Heart right ventricle (tissue), 16 donors: ENCODE measurements at regions of chrX and their contacts with region 1.

Region 1: GRCh38 chrX:46903458-46904242 is 8.6 kb upstream of the JADE3 start:
- DNase-seq: peak; percentile 70 to 77
- ATAC-seq: peak; percentile 95 to 99 (median 98)
- H3K4me3 ChIP-seq: peak overlapping the region in 9 of 10 donors; percentile 28 to 56 (median 45)
- H3K27ac ChIP-seq: no peak overlapping the region
- H3K4me1 ChIP-seq: peaks cover 0 to 12% (median 0%) of the 10 kb centered on the region in 9 donors
- H3K27me3 ChIP-seq: peaks cover 0 to 76% (median 0%) of the 10 kb centered on the region in 7 donors
- CTCF ChIP-seq: peak; percentile 26 to 77 (median 62)

Region 2: GRCh38 chrX:46704767-46705386 is 198.8 kb before region 1 on chrX:
- intact Hi-C with region 1: no loop called
- DNase-seq: no peak
- ATAC-seq: no peak
- H3K4me3 ChIP-seq: no peak overlapping the region
- H3K27ac ChIP-seq: no peak overlapping the region
- H3K4me1 ChIP-seq: no peaks in the 10 kb centered on the region
- H3K27me3 ChIP-seq: peaks cover 0 to 33% (median 0%) of the 10 kb centered on the region in 7 donors
- CTCF ChIP-seq: no peak

Region 3: DNA sequence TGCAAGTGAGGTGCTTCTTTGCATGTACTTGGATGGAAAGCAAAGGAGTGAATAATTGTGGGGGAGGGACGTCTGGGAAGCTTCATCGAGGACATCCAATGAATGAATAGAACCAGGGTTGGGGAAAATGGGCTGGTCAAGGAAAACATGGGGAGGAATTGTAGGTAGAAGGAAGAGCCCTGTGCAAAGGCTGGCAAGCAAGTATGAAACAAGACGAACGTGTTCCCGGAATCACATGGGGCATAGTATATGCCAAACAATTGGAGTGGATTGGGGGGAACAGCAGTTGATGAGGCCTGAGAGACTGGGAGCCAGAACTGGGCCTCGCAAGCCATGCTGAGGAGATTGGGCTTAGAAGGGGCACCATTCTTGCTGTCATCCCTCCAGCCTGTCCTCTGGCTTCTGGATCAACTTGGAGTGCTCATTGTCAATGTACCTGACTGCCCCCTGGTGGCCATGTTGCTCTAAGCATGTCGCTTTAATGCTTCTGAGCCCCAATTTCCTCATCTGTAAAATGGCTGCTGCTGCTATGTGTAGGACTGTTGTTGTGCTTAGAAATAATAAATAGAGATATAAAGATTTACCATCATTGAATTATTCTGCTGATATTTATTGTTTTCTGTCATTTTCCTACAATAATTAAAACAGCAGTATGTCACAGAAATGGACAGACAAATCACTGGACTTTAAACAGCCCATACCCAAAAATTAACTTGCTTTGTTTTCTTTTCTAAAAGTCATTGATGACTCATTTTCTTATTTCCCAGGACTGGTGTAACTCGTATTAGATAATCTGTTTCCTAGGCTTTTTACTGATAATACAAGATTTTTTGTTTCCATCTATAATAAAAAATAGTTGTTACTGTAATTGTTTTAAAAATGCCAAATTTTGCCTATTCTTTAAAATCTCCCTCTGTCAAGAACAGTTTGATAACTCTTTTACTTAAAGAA is 75.0 kb after region 1 on chrX:
- intact Hi-C with region 1: loop called in 5 of 10 experiments (anchors 2 to 10 kb)
- DNase-seq: peak; percentile 48 to 62
- ATAC-seq: peak in 5 of 8 donors; percentile 30 to 67 (median 57)
- H3K4me3 ChIP-seq: no peak overlapping the region
- H3K27ac ChIP-seq: peak overlapping the region in 1 of 10 donors; percentile 23
- H3K4me1 ChIP-seq: peaks cover 0 to 5% (median 0%) of the 10 kb centered on the region in 9 donors
- H3K27me3 ChIP-seq: peaks cover 0 to 26% (median 0%) of the 10 kb centered on the region in 7 donors
- CTCF ChIP-seq: peak; percentile 15 to 70 (median 60)

Region 4: GRCh38 chrX:47030339-47030738 is 126.7 kb after region 1 on chrX:
- intact Hi-C with region 1: loop called in 8 of 10 experiments (anchors 1 to 10 kb)
- DNase-seq: peak in 1 of 2 donors; percentile 32
- ATAC-seq: peak in 1 of 8 donors; percentile 33
- H3K4me3 ChIP-seq: no peak overlapping the region
- H3K27ac ChIP-seq: no peak overlapping the region
- H3K4me1 ChIP-seq: no peaks in the 10 kb centered on the region
- H3K27me3 ChIP-seq: peaks cover 0 to 51% (median 0%) of the 10 kb centered on the region in 7 donors
- CTCF ChIP-seq: peak; percentile 24 to 73 (median 59)

Region 5: DNA sequence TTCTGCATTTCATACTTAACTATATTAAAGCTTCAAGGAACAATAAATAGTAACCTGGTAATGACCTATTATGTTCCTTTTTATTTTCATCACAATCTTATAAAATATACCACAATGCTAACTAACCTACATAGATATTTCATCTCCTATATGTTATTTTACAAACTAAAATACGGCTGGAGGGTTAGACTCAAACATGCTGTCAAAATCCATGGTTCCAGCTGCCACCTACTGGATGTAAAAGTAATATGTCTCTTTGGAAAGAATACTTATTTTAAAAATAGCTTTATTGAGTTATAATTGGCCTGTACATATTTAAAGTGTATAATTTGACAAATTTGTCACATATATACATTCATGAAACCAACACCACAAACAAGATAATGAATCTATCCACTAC is 189.6 kb after region 1 on chrX:
- intact Hi-C with region 1: loop called in 2 of 10 experiments (anchors 10 kb)
- DNase-seq: no peak
- ATAC-seq: no peak
- H3K4me3 ChIP-seq: no peak overlapping the region
- H3K27ac ChIP-seq: no peak overlapping the region
- H3K4me1 ChIP-seq: no peaks in the 10 kb centered on the region
- H3K27me3 ChIP-seq: peaks cover 0 to 38% (median 0%) of the 10 kb centered on the region in 7 donors
- CTCF ChIP-seq: peak in 8 of 9 donors; percentile 8 to 60 (median 45)